Activated CD8-positive, alpha-beta T cell treated with anti-CD3 and anti-CD28 coated beads for 36 hours (primary cell): ENCODE measurements at regions of chr12 and their contacts with region 1.

Region 1: GRCh38 chr12:4276524-4277204 is 3.1 kb downstream of the CCND2 start:
- DNase-seq: peak; percentile 92
- ATAC-seq: peak; percentile 24
- H3K4me3 Mint-ChIP-seq: peak overlapping the region; percentile 100
- H3K27ac Mint-ChIP-seq: peak overlapping the region; percentile 100
- H3K4me1 Mint-ChIP-seq: peaks cover 47% of the 10 kb centered on the region
- H3K27me3 Mint-ChIP-seq: no peaks in the 10 kb centered on the region
- CTCF ChIP-seq: peak; percentile 77

Region 2: GRCh38 chr12:3964439-3964838 is 312.2 kb before region 1 on chr12:
- CTCF ChIA-PET with region 1: interaction called, 17 read pairs
- POLR2A ChIA-PET with region 1: interaction called, 4 read pairs
- intact Hi-C with region 1: no loop called
- DNase-seq: peak; percentile 50
- ATAC-seq: no peak
- H3K4me3 Mint-ChIP-seq: no peak overlapping the region
- H3K27ac Mint-ChIP-seq: no peak overlapping the region
- H3K4me1 Mint-ChIP-seq: peaks cover 20% of the 10 kb centered on the region
- H3K27me3 Mint-ChIP-seq: no peaks in the 10 kb centered on the region
- CTCF ChIP-seq: no peak

Region 3: DNA sequence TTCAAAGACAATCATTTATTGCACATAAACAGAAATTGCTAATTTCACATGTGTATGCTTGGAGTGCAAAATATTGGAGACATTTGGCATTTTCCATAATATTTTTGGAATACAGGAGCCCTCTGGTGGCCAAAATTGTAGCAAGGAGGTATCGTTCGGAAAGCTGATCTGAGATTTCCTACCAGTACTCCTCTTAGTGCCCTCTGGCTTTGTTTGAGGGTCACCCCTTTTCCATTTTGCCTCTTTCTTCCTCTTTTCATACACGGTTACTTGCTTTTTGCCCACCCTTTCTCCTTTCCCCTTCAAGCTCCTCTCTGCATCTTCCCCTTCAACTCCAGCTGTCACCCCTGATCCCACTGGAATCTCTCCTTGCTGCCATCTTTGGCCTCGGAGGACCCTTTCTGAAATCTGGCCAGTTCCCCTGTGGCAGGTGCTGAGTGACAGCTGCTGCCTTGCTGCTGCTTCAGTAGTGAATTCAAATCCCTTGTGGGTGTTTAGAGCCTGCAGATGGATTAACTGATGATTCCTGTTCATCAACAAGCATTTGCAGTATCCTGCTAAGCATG is 238.8 kb before region 1 on chr12:
- CTCF ChIA-PET with region 1: interaction called, 43 read pairs
- POLR2A ChIA-PET with region 1: interaction called, 5 read pairs
- intact Hi-C with region 1: no loop called
- DNase-seq: peak; percentile 31
- ATAC-seq: no peak
- H3K4me3 Mint-ChIP-seq: no peak overlapping the region
- H3K27ac Mint-ChIP-seq: no peak overlapping the region
- H3K4me1 Mint-ChIP-seq: peaks cover 3% of the 10 kb centered on the region
- H3K27me3 Mint-ChIP-seq: no peaks in the 10 kb centered on the region
- CTCF ChIP-seq: peak; percentile 55

Region 4: DNA sequence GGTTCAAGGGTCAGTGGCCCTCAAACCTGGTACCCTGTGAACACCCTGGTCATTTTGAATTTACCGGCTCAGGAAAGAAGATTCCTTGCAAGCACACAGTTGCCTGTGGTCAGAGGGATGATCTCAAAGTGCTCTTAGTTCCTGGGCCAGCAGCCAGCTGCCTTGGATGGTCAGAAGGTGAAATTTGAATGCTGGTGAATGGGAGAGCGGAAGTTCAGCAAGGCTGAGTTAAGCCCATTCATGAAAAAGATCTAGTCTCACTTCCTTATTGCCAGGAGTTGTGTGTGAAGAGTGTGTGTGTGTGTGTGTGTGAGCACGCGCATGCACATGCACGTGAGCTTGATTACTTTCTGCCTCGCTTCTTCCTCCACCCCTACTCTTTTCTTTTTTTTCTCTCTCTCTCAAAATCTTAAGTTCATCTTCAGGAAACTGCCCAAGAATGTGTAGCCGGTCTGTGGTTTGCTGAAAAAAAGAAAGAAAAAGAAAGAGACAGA is 158.6 kb before region 1 on chr12:
- CTCF ChIA-PET with region 1: interaction called, 33 read pairs
- POLR2A ChIA-PET with region 1: interaction called, 97 read pairs
- intact Hi-C with region 1: loop called (anchors 2 kb)
- DNase-seq: no peak
- ATAC-seq: peak; percentile 5
- H3K4me3 Mint-ChIP-seq: peak overlapping the region; percentile 56
- H3K27ac Mint-ChIP-seq: peak overlapping the region; percentile 90
- H3K4me1 Mint-ChIP-seq: peaks cover 58% of the 10 kb centered on the region
- H3K27me3 Mint-ChIP-seq: no peaks in the 10 kb centered on the region
- CTCF ChIP-seq: no peak

Region 5: DNA sequence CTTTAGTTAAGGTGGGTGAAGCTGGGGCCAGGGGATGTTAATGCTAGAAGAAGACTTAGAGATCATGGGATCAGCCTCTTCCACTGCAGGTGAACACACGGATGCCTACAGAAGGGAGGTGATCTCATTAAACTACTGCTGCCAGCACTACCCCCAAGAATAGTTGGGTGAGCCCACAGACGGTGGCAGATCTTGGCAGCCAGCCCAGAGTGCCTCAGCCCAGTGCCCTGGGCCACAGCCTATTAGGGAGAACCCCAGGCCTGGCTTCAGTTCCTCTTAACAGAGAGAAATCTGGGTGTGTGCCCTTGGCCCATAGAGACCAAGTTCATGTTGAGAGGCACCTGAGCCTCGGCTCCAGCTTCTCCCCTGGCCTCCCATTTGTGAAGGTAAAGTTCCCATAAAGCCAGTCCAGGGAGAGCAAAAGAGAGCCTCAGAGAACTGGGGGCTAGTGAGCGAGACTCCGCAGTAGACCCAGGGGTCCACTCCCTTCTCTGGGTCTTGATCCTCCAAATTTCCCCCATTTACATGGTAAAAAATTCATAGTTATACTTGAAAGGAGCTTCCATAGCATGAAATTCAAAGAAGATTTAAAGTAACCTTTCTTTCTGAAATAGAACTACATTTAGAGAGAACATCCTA is 128.1 kb before region 1 on chr12:
- CTCF ChIA-PET with region 1: interaction called, 51 read pairs
- POLR2A ChIA-PET with region 1: interaction called, 375 read pairs
- intact Hi-C with region 1: loop called (anchors 2 kb)
- DNase-seq: peak; percentile 80
- ATAC-seq: peak; percentile 7
- H3K4me3 Mint-ChIP-seq: no peak overlapping the region
- H3K27ac Mint-ChIP-seq: peak overlapping the region; percentile 90
- H3K4me1 Mint-ChIP-seq: peaks cover 87% of the 10 kb centered on the region
- H3K27me3 Mint-ChIP-seq: no peaks in the 10 kb centered on the region
- CTCF ChIP-seq: no peak

Region 6: DNA sequence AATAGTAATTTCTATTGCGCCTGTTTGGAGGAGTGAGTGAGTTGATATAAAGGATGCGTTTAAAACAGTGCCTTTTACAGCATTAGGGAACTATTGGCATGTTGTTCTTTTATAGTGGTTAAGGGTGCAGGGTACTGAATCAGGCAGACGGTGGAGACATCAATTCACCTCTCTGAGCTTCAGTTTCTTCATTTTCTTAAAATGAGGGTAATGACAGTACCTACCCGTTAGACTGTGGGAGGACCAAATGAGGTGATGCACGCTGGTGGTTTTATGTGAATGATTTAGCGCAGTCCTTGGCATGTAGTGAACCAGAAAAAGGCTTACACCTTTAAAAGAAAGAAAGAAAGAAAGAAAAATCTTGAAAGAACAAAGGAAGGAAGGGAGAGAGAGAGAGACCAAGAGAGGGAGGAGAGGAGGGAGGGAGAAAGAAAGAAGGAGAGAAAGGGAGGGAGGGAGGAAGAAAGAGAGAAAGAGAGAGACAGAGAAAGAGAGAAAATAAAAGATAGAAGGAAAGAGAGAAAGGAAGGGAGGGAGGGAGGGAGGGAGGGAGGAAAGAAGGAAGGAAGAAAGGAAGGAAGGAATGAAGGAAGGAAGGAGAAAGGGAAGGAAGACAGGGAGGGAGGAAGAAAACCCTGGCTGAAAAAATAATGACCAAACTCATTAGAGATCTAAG is 25.3 kb before region 1 on chr12:
- CTCF ChIA-PET with region 1: interaction called, 24 read pairs
- POLR2A ChIA-PET with region 1: interaction called, 8 read pairs
- intact Hi-C with region 1: no loop called
- DNase-seq: peak; percentile 66
- ATAC-seq: peak; percentile 94
- H3K4me3 Mint-ChIP-seq: peak overlapping the region; percentile 15
- H3K27ac Mint-ChIP-seq: peak overlapping the region; percentile 68
- H3K4me1 Mint-ChIP-seq: peaks cover 21% of the 10 kb centered on the region
- H3K27me3 Mint-ChIP-seq: peaks cover 4% of the 10 kb centered on the region
- CTCF ChIP-seq: peak; percentile 39

Region 7: DNA sequence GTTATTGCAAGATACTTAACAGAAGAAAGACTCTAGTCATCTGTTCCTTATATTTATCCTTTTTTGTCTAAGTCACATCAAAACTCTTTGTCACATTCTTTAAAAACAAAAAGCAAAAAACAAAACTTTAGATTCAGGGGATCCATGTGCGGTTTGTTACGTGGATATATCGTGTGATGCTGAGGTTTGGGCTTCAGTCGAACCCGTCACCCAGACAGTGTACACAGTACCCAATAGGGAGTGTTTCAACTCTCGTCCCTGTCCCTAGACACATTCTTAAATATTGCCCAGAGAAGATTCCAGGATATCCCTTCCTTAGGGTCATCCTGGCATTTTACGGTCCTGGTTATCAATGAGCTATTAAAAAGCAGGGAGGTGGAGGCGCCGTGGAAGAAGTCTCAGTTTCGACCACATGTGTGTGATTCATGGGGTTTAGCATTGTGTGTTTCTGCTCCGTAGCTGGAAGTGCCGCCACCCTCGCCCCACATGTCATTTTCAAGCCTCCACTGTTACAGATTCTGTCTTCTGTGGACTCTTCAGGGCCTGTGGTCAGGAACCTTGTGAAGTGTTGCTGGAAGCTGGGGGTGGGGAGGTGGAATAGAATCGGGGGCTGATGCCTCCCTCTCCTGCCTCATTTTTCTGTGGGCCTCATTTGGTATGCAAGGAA is 16.8 kb after region 1 on chr12:
- CTCF ChIA-PET with region 1: interaction called, 53 read pairs
- POLR2A ChIA-PET with region 1: interaction called, 49 read pairs
- intact Hi-C with region 1: no loop called
- DNase-seq: peak; percentile 76
- ATAC-seq: peak; percentile 81
- H3K4me3 Mint-ChIP-seq: peak overlapping the region; percentile 55
- H3K27ac Mint-ChIP-seq: peak overlapping the region; percentile 94
- H3K4me1 Mint-ChIP-seq: peaks cover 74% of the 10 kb centered on the region
- H3K27me3 Mint-ChIP-seq: no peaks in the 10 kb centered on the region
- CTCF ChIP-seq: no peak

Region 8: DNA sequence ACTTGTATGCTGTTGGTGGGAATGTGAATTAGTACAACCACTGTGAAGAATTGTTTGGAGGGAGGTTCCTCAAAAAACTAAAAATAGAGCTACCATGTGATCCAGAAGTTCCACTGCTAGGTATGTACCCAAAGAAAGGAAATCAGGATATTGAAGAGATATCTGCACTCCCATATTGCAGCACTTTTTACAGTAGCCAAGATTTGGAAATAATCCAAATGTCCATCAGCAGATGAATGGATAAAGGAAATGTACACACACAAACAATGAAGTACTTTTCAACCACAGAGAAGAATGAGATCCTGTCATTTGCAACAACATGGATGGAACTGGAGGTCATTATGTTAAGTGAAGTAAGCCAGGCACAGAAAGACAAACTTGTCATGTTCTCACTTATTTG is 70.3 kb after region 1 on chr12:
- CTCF ChIA-PET with region 1: no interaction called
- POLR2A ChIA-PET with region 1: no interaction called
- intact Hi-C with region 1: no loop called
- DNase-seq: no peak
- ATAC-seq: no peak
- H3K4me3 Mint-ChIP-seq: no peak overlapping the region
- H3K27ac Mint-ChIP-seq: no peak overlapping the region
- H3K4me1 Mint-ChIP-seq: no peaks in the 10 kb centered on the region
- H3K27me3 Mint-ChIP-seq: no peaks in the 10 kb centered on the region
- CTCF ChIP-seq: no peak

Region 9: DNA sequence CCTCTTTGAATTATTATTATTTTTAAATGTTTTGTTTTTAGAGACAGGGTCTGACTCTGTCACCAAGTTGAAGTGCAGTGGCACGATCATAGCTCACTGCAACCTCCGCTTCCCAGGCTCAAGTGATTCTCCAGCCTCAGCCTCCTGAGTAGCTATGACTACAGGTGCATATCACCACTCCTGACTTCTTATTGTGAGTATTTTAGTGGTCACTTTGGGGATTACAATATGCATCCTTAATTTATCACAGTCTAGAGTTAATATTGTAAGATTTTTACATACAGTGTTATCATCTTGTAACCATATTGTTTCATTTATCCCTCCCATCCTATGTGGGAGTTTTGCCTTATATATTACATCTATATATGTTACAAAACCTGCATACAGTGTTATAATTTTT is 89.4 kb after region 1 on chr12:
- CTCF ChIA-PET with region 1: no interaction called
- POLR2A ChIA-PET with region 1: no interaction called
- intact Hi-C with region 1: no loop called
- DNase-seq: no peak
- ATAC-seq: no peak
- H3K4me3 Mint-ChIP-seq: no peak overlapping the region
- H3K27ac Mint-ChIP-seq: no peak overlapping the region
- H3K4me1 Mint-ChIP-seq: no peaks in the 10 kb centered on the region
- H3K27me3 Mint-ChIP-seq: peaks cover 7% of the 10 kb centered on the region
- CTCF ChIP-seq: no peak